ENCODE measurements at regions of chr2 and their contacts with region 1.

Region 1: GRCh38 chr2:117835990-117836760 is 21.7 kb downstream of the DDX18 start:
- DNase-seq: peak; percentile 88
- ATAC-seq: peak; percentile 85
- H3K4me3 Mint-ChIP-seq: peak overlapping the region; percentile 67
- H3K27ac Mint-ChIP-seq: no peak overlapping the region
- H3K4me1 Mint-ChIP-seq: peaks cover 15% of the 10 kb centered on the region
- H3K27me3 Mint-ChIP-seq: peaks cover 9% of the 10 kb centered on the region
- CTCF ChIP-seq: peak; percentile 46; the same call in 1 of the 2 replicates

Region 2: GRCh38 chr2:117858892-117859531 is 22.8 kb after region 1 on chr2:
- CTCF ChIA-PET with region 1: interaction called, 14 read pairs
- POLR2A ChIA-PET with region 1: interaction called, 3 read pairs
- DNase-seq: peak; percentile 75
- ATAC-seq: peak; percentile 82
- H3K4me3 Mint-ChIP-seq: peak overlapping the region; percentile 55
- H3K27ac Mint-ChIP-seq: no peak overlapping the region
- H3K4me1 Mint-ChIP-seq: peaks cover 4% of the 10 kb centered on the region
- H3K27me3 Mint-ChIP-seq: peaks cover 42% of the 10 kb centered on the region
- CTCF ChIP-seq: no peak